K562 (cell line): ENCODE measurements at regions of chr1 and their contacts with region 1.

Region 1: DNA sequence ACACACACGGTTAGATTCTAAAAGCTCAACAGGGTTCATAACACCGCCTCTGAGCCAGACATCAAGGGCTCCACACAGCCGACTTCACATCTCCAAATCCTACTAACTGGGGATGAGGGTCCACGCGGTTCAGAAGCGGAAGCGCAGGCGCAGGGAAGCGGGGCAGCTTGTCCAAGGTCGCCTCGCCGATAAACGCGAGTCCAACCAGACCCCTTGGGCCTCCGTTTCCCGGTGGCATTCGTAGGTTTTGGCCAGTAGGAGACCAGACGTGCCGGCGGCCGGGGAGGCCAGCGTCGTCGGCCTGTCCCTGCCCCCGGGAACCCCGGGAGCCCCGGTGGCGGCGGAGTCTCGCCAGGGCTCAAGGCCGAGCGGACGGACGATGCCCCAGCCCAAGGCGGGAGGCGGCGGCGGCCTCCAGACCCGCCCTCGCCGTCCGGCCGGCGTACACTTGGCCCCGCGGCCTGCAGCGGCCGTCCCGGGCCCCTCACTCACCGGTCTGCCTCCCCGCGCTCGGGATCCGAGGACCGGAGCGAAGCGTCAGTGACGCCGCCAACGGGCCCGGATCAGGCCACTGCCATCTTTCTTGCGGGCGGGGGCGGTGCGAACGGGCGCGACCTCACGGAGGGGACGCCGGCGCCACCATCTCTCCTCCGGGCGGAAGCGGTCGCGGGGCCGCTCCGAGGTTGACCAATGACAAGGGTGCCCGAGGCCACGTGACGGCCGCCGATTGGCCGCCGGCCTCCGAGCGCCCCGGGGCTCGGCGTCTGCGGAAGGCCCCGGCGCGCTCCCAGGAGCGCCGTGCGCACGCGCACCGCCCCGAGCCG is at the start of gene SDF4:
- DNase-seq: peak; percentile 99 to 100 (median 100)
- ATAC-seq: peak; percentile 99
- H3K4me3 ChIP-seq: peak within 1 kb of the TSS; percentile 79
- H3K27ac ChIP-seq: peak within 1 kb of the TSS; percentile 96
- H3K4me1 ChIP-seq: peaks cover 6 to 83% of the 10 kb centered on the region in 2 experiments; a peak in 4 of 5 replicates
- H3K27me3 ChIP-seq: no peaks in the 10 kb centered on the region
- CTCF ChIP-seq: no peak
- EP300 ChIP-seq: no peak
- POLR2A ChIP-seq: peak; percentile 91
- RAD21 ChIP-seq: no peak
- polyA plus RNA-seq, gene SDF4: 0.35 to 4.9 TPM

Region 2: DNA sequence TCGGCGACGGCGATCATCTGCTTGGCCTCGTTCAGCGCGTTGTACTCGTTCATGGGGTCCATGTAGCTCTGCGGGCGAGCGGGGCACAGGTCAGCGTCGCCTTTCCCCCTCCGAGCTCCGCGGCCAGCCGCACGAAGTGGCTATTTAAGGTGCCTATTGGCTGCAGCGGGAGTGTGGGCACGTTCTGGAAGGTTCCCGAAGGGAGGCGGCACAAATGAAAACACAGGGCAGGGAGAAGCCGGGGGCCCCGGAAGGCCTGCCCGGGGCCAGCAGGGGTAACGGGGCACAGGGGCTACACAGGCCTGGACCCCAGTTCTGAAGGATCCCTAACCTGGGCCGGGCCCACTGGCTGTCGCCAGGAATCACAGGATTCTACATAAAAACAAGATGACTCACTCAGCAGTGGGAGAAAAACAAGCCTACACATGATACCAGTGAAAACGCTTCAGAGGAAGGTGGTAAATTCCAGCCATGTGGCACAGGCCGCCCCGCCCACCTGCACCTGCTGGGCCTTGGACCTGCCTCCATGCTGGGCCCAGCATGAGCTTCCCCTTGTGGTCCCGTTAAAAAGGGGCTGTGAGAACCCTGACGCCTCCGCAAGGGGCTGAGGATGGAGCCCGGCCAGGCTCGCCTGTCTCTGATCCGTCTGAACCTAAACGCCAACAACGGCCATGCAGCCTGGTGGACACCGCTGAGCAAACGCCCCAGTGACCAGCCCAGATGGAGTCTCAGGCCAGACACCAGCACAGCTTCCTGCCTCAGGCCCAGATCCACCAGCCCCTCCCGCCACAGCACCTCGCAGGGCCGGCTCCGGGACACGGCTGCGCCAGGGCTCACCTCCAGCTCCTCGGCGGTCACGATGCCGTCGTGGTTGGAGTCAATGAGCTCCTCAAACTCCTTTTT is 13.7 kb before region 1 on chr1:
- CTCF ChIA-PET with region 1: no interaction called
- POLR2A ChIA-PET with region 1: interaction called, 12 read pairs
- in situ Hi-C with region 1: no loop called
- intact Hi-C with region 1: no loop called
- DNase-seq: no peak
- ATAC-seq: no peak
- H3K4me3 ChIP-seq: no peak overlapping the region
- H3K27ac ChIP-seq: no peak overlapping the region
- H3K4me1 ChIP-seq: peaks cover 0 to 74% of the 10 kb centered on the region in 2 experiments; a peak in 2 of 5 replicates
- H3K27me3 ChIP-seq: no peaks in the 10 kb centered on the region
- CTCF ChIP-seq: no peak
- EP300 ChIP-seq: no peak
- POLR2A ChIP-seq: no peak
- RAD21 ChIP-seq: no peak